PC-9 (cell line): ENCODE measurements at regions of chr9 and their contacts with region 1.

Region 1: DNA sequence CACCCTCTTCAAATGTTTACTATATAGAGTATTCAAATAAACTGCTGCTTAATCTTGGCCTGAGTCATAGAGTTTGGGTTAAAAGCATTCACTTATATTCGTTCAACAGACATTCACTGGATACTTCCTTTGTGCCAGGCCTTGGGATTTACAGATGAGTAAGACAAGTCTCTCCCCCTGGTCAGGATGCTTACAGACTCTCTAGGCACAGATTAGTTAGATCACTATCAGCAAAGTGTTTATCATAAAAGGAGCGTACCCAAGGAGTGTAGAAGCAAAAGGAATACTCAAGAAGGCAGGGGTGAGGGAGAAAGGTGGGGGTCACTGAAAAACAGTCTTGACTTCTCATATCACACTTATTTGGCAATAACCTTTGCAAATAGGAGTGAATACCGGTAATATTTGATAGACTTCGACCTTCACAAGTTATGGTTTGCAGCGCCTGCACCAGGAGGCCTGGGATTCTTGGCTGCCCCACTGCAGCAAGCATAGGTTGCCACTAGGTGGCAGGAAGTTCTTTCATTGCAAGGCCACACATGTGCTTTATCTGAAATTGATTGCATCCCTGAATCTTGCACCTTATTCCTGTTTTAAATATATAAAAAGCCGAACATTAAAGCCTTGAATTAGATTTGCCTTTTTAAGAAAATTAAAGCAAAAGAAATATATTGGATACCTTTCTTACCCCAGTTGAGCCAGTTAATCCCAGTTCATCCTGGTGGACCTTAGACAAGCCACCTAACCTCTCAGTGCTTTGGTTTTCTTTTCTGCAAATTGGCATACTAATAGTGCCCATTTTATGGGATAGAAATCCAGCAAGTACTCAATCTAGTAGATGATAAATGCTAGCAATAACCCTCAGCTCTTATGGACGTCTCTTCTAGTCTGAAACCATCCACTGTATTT is 6.5 kb upstream of the TRMT10B start:
- DNase-seq: peak; percentile 41 to 44
- H3K4me3 ChIP-seq: no peak overlapping the region
- H3K27ac ChIP-seq: no peak overlapping the region
- H3K4me1 ChIP-seq: no peaks in the 10 kb centered on the region
- H3K27me3 ChIP-seq: no peaks in the 10 kb centered on the region
- CTCF ChIP-seq: peak; percentile 79

Region 2: DNA sequence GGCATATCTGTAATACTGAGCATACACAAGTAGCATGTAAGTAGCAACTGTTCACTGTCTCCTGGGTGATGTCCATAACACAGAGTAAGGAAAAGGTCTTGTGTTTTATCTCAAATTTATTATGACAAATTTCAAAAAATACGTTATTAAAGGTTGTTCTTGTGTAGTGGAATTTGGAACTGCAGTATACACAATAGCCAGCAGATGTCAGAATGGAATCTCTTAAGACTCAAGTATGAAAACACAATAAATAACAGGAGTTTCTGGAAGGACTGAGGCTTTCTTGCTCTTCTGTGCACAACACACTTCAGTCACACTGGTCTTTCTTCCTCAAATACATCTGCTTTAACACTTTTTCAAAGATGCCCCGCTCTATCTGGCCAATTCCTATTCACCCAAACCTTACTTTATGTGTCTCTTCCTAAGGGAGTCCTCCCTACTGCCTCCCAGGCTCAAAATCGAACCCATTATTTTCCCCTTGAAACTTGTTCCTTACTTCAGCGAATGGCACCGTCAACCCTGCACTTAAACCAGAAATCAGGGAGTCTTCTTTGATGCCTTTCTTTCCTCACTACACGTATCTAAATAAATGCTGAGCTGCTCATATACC is 164.4 kb before region 1 on chr9:
- CTCF ChIA-PET with region 1: no interaction called
- POLR2A ChIA-PET with region 1: interaction called, 3 read pairs
- intact Hi-C with region 1: loop called (anchors 10 kb)
- DNase-seq: no peak
- H3K4me3 ChIP-seq: no peak overlapping the region
- H3K27ac ChIP-seq: no peak overlapping the region
- H3K4me1 ChIP-seq: no peaks in the 10 kb centered on the region
- H3K27me3 ChIP-seq: no peaks in the 10 kb centered on the region
- CTCF ChIP-seq: peak; percentile 73

Region 3: GRCh38 chr9:37862530-37862929 is 115.4 kb after region 1 on chr9:
- CTCF ChIA-PET with region 1: no interaction called
- POLR2A ChIA-PET with region 1: no interaction called
- intact Hi-C with region 1: loop called (anchors 5 kb)
- DNase-seq: no peak
- H3K4me3 ChIP-seq: no peak overlapping the region
- H3K27ac ChIP-seq: no peak overlapping the region
- H3K4me1 ChIP-seq: no peaks in the 10 kb centered on the region
- H3K27me3 ChIP-seq: no peaks in the 10 kb centered on the region
- CTCF ChIP-seq: no peak